ENCODE measurements at regions of chr15 and their contacts with region 1.

Region 1: DNA sequence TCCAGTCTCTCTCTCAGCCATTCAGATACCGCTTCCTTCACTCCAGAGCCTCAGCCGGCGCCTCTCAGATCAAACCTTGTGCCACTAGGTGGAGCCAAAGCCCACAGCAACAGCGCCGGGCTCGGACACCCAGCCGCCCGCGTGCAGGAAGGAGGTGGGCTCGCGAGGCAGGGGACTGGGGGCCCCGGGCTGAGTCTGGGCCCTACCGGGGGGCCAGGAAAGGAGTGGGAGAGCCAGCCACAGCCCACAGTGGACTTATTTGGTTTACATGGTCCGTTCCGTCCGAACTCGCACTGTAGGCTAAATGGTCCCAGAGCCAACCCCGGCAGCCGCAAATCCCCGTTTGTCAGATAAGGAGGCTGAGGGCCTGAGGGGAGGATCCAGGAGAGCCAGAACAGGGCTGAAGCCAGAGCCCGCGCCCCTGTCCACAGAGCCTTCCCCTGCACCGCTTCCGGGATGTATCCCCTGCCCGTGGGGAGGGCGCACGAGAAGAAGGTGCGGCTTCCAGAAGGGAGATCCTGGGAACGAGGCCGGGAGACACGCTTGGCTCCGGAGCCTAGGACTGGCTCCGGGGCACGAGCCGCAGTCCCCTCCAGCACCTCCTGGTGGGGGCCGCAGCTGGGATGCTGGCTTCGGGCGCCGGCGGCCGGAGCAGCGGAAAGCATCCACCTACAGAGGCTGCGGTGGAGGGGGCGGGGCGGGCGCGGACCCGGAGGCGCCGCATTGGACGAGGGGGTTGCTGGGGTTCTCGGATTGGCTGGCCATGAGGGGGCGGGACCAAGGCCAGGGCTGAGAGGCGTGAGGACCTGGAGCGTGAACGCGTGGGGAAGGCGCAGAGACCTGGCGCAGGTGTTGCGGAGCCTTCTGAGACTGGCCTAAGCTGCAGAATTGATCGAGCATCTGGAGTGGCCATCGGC is 6.5 kb upstream of the CYP11A1 start:
- DNase-seq: peak; percentile 82
- ATAC-seq: peak; percentile 93
- H3K4me3 ChIP-seq: peak overlapping the region; percentile 54 to 56
- H3K27ac ChIP-seq: peak overlapping the region; percentile 57
- H3K4me1 ChIP-seq: peaks cover 10 to 24% of the 10 kb centered on the region in 2 experiments; a peak in 3 of 4 replicates
- H3K27me3 ChIP-seq: peaks cover 14% of the 10 kb centered on the region
- CTCF ChIP-seq: peak in 2 of 3 experiments; percentile 88 to 89; a peak in 4 of 6 replicates
- POLR2A ChIP-seq: peak; percentile 47
- RAD21 ChIP-seq: no peak

Region 2: GRCh38 chr15:74438721-74439316 is 64.8 kb after region 1 on chr15:
- CTCF ChIA-PET with region 1: interaction called, 83 read pairs
- POLR2A ChIA-PET with region 1: no interaction called
- RAD21 ChIA-PET with region 1: interaction called in 1 of 2 experiments, 4 read pairs
- intact Hi-C with region 1: loop called (anchors 2 kb)
- DNase-seq: peak; percentile 74
- ATAC-seq: peak; percentile 81
- H3K4me3 ChIP-seq: no peak overlapping the region
- H3K27ac ChIP-seq: no peak overlapping the region
- H3K4me1 ChIP-seq: peaks cover 6 to 14% of the 10 kb centered on the region in 2 experiments
- H3K27me3 ChIP-seq: no peaks in the 10 kb centered on the region
- CTCF ChIP-seq: peak; percentile 94 to 96 (median 95)
- POLR2A ChIP-seq: no peak
- RAD21 ChIP-seq: peak; percentile 99

Region 3: GRCh38 chr15:74540761-74541493 is 166.9 kb after region 1 on chr15 and contains the start of gene ARID3B:
- CTCF ChIA-PET with region 1: no interaction called
- POLR2A ChIA-PET with region 1: no interaction called
- RAD21 ChIA-PET with region 1: no interaction called
- intact Hi-C with region 1: loop called (anchors 2 kb)
- DNase-seq: peak; percentile 95
- ATAC-seq: peak; percentile 97
- H3K4me3 ChIP-seq: peak within 1 kb of the TSS; percentile 88 to 91
- H3K27ac ChIP-seq: peak within 1 kb of the TSS; percentile 72
- H3K4me1 ChIP-seq: peaks cover 15 to 36% of the 10 kb centered on the region in 2 experiments
- H3K27me3 ChIP-seq: peaks cover 10% of the 10 kb centered on the region; the same call in 1 of the 2 replicates
- CTCF ChIP-seq: no peak
- POLR2A ChIP-seq: peak; percentile 23
- RAD21 ChIP-seq: no peak
- total RNA-seq, gene ARID3B: 8.1 TPM

Region 4: GRCh38 chr15:74635228-74635627 is 261.2 kb after region 1 on chr15:
- CTCF ChIA-PET with region 1: interaction called, 26 read pairs
- POLR2A ChIA-PET with region 1: no interaction called
- RAD21 ChIA-PET with region 1: interaction called in 1 of 2 experiments, 5 read pairs
- intact Hi-C with region 1: loop called (anchors 1 kb)
- DNase-seq: no peak
- ATAC-seq: peak; percentile 86
- H3K4me3 ChIP-seq: no peak overlapping the region
- H3K27ac ChIP-seq: no peak overlapping the region
- H3K4me1 ChIP-seq: no peaks in the 10 kb centered on the region
- H3K27me3 ChIP-seq: no peaks in the 10 kb centered on the region
- CTCF ChIP-seq: peak; percentile 87 to 94 (median 88)
- POLR2A ChIP-seq: no peak
- RAD21 ChIP-seq: peak; percentile 96